ENCODE measurements at regions of chr5 and their contacts with region 1.

Region 1: DNA sequence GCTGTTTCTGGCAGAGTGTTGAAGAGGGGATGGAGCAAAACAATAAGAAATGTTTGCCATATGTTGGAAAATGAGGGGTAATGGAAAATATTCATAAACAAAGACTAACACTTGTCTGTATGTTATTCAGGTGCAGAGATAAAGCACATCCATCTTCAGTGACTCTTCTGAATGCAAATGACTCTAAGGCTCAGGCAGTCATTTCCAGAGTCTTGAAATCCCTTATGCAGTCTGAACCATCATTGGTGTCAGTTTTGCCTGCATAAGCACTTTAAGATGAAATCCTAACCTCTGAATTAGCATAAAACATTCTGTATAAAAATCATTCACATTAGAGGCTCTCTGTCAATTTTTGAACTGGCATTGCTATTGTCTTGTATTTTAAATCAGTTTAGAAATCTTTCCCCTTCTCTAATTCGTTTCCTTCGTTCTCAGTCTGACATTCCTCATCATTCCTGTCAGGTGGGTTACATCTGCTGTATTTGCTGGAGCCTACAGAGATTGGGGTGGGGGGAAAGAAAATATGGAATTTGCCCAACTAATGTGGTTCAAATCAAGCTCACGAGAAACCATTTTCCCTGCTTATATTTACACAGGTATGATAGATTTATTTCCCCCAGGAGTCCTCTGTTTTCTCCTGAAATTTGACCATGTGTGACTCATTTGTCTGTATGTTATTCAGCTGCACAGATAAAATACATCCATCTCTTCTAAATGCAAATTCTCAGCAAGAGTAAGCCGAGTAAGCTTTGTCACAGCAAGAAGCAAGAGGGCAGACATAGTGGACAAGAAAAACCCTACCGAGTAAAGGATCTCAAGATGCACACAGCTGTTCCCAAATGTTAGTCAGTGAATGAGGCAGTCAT is 31.6 kb downstream of the ENC1 start:
- DNase-seq: no peak
- H3K4me3 ChIP-seq: no peak overlapping the region
- H3K27ac ChIP-seq: no peak overlapping the region
- H3K4me1 ChIP-seq: no peaks in the 10 kb centered on the region
- H3K27me3 ChIP-seq: no peaks in the 10 kb centered on the region
- CTCF ChIP-seq: no peak
- EP300 ChIP-seq: no peak
- POLR2A ChIP-seq: no peak

Region 2: DNA sequence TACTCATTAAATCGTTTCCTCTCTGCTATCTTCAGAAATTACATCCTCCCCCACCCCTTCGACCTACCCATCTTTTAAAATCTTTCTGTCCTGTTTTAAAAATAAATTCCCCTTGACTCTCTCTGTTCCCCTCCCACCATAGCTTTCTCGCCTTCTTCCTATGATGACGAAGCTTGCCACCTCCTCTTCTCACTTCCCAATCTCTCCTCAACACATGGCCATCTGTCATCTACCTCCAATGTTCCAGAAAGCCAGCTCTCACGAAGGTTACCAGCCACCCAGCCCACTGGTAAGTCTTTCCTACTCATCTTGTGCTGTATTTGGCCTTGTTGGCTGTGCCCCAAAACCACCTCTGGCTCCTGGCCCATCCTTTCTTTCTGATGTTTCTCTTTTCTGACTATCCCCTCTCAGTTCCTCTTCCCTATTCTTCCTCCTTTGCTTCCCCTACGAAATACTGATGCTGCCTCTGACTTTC is 314.7 kb before region 1 on chr5:
- intact Hi-C with region 1: no loop called
- DNase-seq: peak in 4 of 5 donors; percentile 22 to 64 (median 42)
- H3K4me3 ChIP-seq: no peak overlapping the region
- H3K27ac ChIP-seq: no peak overlapping the region
- H3K4me1 ChIP-seq: peaks cover 11% of the 10 kb centered on the region
- H3K27me3 ChIP-seq: no peaks in the 10 kb centered on the region
- CTCF ChIP-seq: no peak
- EP300 ChIP-seq: no peak
- POLR2A ChIP-seq: no peak

Region 3: DNA sequence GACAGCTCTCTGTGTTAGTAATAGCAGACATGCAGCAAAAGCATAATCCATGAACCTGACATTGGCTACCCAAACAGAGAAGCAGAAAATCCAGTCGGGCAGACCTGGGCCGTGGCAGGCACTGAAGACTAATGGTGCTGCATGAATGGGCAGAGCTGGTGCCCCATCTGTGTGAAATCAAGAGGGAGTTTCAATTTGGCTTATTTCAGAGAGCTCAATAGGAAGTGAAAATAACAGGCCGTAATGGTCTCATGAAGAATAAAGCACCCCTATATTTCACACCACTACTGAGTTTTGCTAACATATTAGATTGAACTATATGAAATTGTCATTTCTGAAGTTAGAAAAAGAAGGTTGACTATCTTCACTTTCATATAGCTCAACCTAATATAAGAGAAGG is 118.2 kb before region 1 on chr5:
- intact Hi-C with region 1: no loop called
- DNase-seq: no peak
- H3K4me3 ChIP-seq: no peak overlapping the region
- H3K27ac ChIP-seq: no peak overlapping the region
- H3K4me1 ChIP-seq: no peaks in the 10 kb centered on the region
- H3K27me3 ChIP-seq: no peaks in the 10 kb centered on the region
- CTCF ChIP-seq: no peak
- EP300 ChIP-seq: no peak
- POLR2A ChIP-seq: no peak

Region 4: DNA sequence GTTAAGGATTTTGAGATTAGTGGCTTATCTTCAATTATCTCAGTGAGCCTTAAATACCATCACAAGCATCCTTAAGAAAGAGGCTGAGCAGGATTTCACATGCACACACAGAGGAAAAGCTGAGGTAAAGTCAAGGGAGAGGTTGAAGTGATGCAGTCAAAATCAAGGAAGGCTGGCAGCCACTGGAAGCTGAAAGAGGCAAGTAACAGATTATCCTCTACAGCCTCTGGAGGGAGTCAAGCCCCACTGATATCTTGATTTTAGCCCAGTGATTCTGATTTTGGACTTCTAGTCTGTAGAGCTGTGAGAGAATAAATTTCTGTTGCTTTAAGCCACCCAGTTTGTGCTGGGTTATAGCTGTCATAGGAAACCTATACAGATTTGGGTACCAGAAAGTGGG is 547.6 kb after region 1 on chr5:
- intact Hi-C with region 1: loop called in 1 of 4 experiments (anchors 10 kb)
- DNase-seq: no peak
- H3K4me3 ChIP-seq: no peak overlapping the region
- H3K27ac ChIP-seq: no peak overlapping the region
- H3K4me1 ChIP-seq: no peaks in the 10 kb centered on the region
- H3K27me3 ChIP-seq: no peaks in the 10 kb centered on the region
- CTCF ChIP-seq: no peak
- EP300 ChIP-seq: no peak
- POLR2A ChIP-seq: no peak